Activated T-helper 1 cell treated with anti-CD3 and anti-CD28 coated beads, Interleukin-12 subunit alpha, Interleukin-12 subunit beta, Interleukin-2, Interleukin-4 antibody, amounts not matched to agents 30 ng/mL and 10 ng/mL and 1 ng/mL, durations not matched to agents 14 hours and 24 hours and 36 hours (primary cell): ENCODE measurements at regions of chr1 and their contacts with region 1.

Region 1: GRCh38 chr1:30779294-30780071 is 21.9 kb upstream of the LAPTM5 start:
- DNase-seq: peak; percentile 83
- H3K4me3 Mint-ChIP-seq: no peak overlapping the region
- H3K27ac Mint-ChIP-seq: no peak overlapping the region
- H3K4me1 Mint-ChIP-seq: peaks cover 20% of the 10 kb centered on the region
- H3K27me3 Mint-ChIP-seq: peaks cover 8% of the 10 kb centered on the region

Region 2: GRCh38 chr1:29230553-29231378 is 1548.7 kb before region 1 on chr1 and contains the start of gene MECR:
- intact Hi-C with region 1: loop called (anchors 10 kb)
- DNase-seq: peak; percentile 95
- H3K4me3 Mint-ChIP-seq: peak within 1 kb of the TSS; percentile 94
- H3K27ac Mint-ChIP-seq: peak within 1 kb of the TSS; percentile 84
- H3K4me1 Mint-ChIP-seq: peaks cover 23% of the 10 kb centered on the region
- H3K27me3 Mint-ChIP-seq: peaks cover 15% of the 10 kb centered on the region
- total RNA-seq, gene MECR: 34.5 and 36.4 TPM in 2 replicates

Region 3: DNA sequence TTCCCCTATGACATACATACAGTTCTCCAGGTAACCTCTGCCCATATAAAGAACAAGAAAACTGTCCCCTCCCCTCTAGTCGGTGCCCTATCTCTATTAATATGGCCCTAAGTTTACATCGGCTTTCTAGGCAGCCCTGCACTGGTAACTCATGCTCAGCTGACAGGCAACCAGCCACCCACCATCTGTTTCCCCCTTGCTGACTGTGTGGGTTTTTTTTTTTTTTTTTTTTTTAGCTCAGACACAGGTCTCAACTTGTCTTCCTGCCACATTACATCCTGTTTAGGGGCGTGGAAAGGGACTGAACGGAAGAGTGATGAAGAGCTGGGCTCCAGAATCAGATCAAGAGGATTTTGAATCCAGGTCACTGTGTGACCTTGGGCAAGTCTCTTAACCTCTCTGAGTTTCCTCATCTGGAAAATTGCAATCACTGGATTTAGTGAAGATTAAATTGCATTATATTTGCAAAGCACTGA is 35.9 kb before region 1 on chr1:
- intact Hi-C with region 1: loop called (anchors 1 kb)
- DNase-seq: peak; percentile 68
- H3K4me3 Mint-ChIP-seq: peak overlapping the region; percentile 64
- H3K27ac Mint-ChIP-seq: peak overlapping the region; percentile 98
- H3K4me1 Mint-ChIP-seq: peaks cover 96% of the 10 kb centered on the region
- H3K27me3 Mint-ChIP-seq: no peaks in the 10 kb centered on the region

Region 4: DNA sequence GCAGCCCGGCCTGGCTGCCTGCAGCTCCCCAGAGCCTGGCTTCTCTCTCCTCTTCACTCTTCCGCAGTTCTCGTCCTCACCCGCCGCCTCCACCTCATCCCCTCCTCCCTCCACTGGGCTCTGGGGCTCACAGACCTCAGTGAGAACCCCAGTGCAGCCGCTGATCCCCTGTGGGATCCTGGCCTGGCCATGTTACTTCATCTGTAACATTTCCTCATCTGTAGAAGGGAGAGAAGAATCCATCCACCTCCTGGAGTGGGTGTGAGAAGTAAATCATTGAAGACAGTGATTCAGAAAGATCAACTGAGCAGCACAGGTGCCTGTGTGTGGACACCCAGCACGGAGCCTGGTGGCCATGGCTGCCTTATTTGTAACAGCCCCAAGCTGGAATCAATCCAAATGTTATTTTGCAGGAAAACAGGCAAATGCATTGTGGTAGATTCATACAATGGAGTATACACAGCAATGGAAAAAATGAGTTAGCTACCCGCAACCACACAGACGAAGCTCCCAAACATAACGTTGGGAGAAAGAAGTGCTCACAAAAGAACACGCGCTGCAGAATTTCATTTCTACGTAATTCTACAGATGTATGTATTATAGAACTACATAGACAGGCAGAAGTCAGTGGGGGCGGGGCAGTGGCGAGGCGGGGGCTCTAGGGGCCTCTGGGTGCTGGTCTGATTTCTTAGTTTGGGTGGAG is 30.6 kb before region 1 on chr1:
- intact Hi-C with region 1: loop called (anchors 1 kb)
- DNase-seq: no peak
- H3K4me3 Mint-ChIP-seq: peak overlapping the region; percentile 86
- H3K27ac Mint-ChIP-seq: peak overlapping the region; percentile 98
- H3K4me1 Mint-ChIP-seq: peaks cover 91% of the 10 kb centered on the region
- H3K27me3 Mint-ChIP-seq: no peaks in the 10 kb centered on the region

Region 5: DNA sequence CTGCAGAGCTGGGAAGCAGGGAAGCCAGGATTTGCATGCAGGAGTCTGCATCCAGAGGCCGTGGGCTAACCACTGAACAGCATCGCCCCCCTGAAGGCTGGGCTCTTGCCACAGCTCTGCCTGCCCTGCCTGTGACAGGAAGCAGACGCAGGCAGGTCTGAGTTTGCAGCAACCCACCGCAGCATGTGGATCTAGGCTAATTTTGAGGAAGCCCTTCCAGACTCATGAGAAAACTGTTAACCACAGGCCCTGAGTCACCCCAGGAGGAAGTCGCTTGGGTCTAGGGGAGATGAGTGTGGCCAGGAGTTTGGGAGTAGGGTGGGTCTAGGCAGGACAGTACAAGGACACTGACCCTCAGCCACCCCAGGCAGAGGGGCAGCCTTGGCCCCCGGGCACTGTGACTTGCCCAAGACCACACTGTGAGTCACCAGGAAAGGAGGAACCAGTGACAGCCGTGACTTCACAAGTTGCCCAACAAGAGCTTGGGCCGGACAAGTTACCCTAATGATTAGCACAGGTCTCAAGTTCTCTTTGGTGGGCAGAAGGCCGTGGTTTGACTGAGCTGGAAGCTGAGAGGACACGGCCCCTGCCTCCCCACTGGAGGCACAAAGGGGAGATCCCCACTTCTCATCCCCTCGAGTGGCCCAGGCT is 22.8 kb before region 1 on chr1:
- intact Hi-C with region 1: loop called (anchors 1 kb)
- DNase-seq: peak; percentile 64
- H3K4me3 Mint-ChIP-seq: peak overlapping the region; percentile 99
- H3K27ac Mint-ChIP-seq: peak overlapping the region; percentile 97
- H3K4me1 Mint-ChIP-seq: peaks cover 99% of the 10 kb centered on the region
- H3K27me3 Mint-ChIP-seq: no peaks in the 10 kb centered on the region

Region 6: DNA sequence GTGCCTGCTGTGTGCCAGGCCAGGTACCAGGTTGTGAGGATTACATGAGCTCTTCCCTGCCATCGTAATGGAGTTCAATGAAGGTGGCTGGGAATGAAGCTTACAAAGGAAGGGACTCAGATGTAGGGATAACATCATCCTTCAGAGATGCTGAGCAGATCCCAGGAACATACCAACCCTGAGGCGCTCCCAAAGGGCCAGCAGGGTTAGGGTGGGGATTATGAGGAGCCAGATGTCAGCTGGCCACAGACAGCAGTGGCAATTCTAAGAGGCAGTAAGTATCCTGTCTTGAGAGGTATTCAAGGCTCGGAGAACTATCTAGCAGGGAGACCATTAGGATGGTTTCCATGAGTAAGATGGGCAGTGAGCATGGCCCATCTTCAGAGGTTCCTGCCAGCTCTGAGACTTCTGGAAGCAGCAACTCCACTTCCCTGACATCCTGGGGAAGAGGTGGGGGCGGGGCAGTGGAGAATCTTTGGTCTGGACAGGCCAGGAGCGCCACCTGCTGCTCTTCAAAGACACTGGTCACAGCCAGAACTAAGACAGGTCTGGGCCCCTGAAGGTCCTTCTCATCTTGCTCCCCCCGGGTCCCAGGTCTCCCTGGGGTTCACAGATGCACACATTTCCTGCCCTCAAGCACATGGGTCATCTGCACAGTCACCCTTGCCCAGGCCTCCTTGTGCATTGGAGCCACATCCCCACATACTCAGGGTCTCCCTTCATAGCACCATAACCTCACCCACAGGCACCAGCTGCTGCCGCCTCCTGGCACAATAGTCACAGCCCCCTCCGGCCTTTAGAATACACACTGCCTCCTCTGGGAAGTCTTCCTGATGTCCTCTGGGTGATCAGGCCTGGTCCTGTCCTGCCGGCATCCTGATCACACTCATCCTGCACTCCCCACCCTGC is 131.8 kb after region 1 on chr1:
- intact Hi-C with region 1: loop called (anchors 1 kb)
- DNase-seq: peak; percentile 13
- H3K4me3 Mint-ChIP-seq: no peak overlapping the region
- H3K27ac Mint-ChIP-seq: no peak overlapping the region
- H3K4me1 Mint-ChIP-seq: peaks cover 8% of the 10 kb centered on the region
- H3K27me3 Mint-ChIP-seq: peaks cover 35% of the 10 kb centered on the region

Region 7: DNA sequence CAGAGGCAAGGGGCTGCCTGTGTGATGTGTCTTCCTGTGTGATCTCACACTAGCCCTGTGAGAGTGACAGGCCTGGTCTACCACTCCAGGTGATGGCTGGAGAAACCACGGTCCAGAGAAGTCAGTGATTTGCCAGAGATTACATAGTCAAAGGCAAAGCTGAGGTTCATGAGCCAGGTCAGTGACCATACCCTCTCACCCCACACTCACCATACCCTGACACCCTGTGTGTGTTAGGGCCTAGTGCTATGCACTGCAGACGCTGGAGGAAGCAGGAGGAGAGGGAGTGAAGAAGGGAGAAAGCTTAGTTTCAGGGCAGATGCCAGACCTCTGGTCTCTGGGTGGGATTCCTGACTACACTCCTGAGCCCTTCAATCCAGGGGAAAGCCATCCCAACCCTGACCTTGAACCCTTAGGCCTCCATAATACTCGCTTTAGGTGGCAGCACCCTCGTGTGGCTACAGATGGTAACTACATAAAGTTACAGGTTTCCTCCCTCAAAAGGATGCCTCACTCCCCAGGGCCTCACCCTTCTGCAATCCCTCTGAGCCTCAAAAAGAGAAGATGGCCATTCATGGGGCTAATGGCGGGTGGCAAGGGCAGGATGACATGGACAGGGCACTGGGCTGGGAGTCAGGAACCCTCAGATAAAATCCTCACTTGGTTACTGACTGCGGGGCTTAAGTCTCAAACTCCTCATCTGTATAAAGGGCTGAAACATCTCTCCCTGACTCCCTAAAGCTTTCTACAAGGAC is 149.8 kb after region 1 on chr1:
- intact Hi-C with region 1: loop called (anchors 1 kb)
- DNase-seq: peak; percentile 30
- H3K4me3 Mint-ChIP-seq: no peak overlapping the region
- H3K27ac Mint-ChIP-seq: no peak overlapping the region
- H3K4me1 Mint-ChIP-seq: no peaks in the 10 kb centered on the region
- H3K27me3 Mint-ChIP-seq: peaks cover 3% of the 10 kb centered on the region